Activated CD4-positive, alpha-beta memory T cell treated with anti-CD3 and anti-CD28 coated beads for 36 hours (primary cell): ENCODE measurements at regions of chr17 and their contacts with region 1.

Region 1: DNA sequence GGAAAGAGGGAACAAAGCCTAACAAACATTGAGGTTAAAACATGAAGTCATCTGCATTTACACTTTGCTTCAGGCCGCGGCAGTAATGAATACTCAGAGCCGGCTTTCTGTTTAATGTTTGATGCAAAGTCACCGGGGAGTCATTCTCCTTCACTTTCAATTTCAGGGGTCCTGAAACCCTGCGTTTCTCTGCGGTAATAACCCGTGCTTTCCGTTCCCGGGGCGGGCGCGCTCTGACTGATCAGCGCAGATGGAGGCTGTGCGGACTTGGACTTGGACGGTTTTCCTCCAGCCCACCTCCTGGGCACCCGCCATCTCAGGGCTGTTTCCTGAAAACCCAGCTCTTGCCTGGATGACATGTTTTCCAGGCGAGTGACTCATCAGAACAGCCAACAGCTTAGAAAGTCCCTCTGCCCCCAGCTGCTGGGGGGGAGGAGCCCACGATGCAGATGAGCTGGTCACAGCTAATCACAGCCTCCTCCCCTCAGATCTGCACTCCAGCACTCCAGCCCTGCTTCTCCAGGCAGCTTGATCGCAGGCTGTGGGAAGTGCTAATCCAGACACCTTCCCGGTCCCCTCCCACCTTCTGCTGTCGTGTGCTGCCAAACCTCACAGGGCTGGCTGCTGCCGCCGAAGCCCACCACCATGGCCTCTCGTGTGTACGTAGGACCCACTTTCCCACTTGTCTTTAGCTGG is 158.6 kb upstream of the CHMP6 start:
- DNase-seq: peak; percentile 92
- H3K4me3 Mint-ChIP-seq: peak overlapping the region; percentile 74
- H3K27ac Mint-ChIP-seq: peak overlapping the region; percentile 94
- H3K4me1 Mint-ChIP-seq: peaks cover 34% of the 10 kb centered on the region
- H3K27me3 Mint-ChIP-seq: no peaks in the 10 kb centered on the region

Region 2: DNA sequence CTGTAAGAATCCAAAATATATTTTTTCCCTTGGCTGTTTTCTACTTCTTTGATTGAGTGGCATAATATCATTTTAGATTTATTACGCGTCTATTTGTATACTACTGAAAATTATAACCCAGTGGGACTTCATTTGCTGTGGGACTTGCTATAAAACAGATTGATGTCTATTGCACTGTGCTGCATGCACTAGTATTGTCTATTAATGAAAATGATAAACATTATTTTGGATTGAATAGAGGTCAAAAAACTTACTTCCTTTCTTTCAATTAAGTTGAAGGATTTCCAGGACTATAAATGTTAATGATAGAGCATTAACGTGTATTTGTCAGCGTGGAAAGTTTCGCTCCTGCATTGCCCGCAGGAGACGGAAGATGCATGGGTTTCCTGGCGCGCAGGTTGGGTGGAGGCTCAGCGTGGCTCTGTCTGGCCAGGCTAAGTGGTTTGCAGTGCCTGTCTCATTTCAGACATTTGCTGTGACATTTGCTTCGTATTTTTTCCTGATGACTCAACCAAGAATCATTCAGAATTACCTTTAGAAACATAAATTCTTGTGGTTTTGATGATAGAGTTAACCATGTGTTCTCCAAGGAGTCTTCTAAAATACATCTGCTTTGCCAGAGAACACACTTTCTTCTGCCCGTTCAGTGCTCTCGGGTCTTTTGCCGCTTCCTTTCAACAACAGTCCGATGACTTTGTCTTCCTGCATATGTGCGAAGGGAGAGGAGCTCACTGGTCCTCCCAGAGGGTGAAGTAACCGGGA is 71.7 kb before region 1 on chr17:
- CTCF ChIA-PET with region 1: interaction called, 3 read pairs
- POLR2A ChIA-PET with region 1: no interaction called
- intact Hi-C with region 1: loop called (anchors 1 kb)
- DNase-seq: peak; percentile 86
- H3K4me3 Mint-ChIP-seq: peak overlapping the region; percentile 68
- H3K27ac Mint-ChIP-seq: peak overlapping the region; percentile 96
- H3K4me1 Mint-ChIP-seq: peaks cover 73% of the 10 kb centered on the region
- H3K27me3 Mint-ChIP-seq: no peaks in the 10 kb centered on the region

Region 3: DNA sequence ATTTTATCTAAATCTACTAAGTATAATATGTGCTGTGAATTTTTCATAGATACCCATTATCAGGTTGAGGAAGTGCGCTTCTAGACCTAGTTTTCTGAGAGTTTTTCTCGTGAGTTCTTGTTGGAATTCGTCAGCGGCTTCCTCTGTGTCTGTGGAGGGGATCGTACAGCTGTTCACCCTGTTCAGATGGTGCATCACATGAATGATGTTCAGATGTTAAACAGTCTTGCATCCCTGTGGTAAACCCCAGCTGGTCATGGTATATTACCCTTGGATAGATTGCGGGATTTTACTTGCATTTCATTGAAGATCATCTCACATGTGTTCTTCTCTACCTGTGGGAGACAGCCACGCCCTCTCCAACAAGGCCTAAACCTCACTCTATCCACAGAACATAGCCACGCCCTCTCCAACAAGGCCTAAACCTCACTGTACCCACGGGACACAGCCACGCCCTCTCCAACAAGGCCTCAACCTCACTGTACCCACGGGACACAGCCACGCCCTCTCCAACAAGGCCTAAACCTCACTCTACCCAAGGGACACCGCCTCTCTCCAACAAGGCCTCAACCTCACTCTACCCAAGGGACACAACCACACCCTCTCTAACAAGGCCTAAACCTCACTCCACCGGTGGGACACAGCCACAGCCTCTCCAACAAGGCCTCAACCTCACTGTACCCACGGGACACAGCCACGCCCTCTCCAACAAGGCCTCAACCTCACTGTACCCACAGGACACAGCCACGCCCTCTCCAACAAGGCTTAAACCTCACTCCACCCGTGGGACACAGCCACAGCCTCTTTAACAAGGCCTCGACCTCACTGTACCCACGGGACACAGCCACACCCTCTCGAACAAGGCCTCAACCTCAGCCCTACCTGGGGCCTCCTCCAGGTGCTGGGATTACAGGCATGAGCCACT is 21.6 kb before region 1 on chr17:
- CTCF ChIA-PET with region 1: interaction called, 4 read pairs
- POLR2A ChIA-PET with region 1: no interaction called
- intact Hi-C with region 1: loop called (anchors 2 kb)
- DNase-seq: peak; percentile 30
- H3K4me3 Mint-ChIP-seq: peak overlapping the region; percentile 45
- H3K27ac Mint-ChIP-seq: peak overlapping the region; percentile 97
- H3K4me1 Mint-ChIP-seq: peaks cover 36% of the 10 kb centered on the region
- H3K27me3 Mint-ChIP-seq: no peaks in the 10 kb centered on the region

Region 4: DNA sequence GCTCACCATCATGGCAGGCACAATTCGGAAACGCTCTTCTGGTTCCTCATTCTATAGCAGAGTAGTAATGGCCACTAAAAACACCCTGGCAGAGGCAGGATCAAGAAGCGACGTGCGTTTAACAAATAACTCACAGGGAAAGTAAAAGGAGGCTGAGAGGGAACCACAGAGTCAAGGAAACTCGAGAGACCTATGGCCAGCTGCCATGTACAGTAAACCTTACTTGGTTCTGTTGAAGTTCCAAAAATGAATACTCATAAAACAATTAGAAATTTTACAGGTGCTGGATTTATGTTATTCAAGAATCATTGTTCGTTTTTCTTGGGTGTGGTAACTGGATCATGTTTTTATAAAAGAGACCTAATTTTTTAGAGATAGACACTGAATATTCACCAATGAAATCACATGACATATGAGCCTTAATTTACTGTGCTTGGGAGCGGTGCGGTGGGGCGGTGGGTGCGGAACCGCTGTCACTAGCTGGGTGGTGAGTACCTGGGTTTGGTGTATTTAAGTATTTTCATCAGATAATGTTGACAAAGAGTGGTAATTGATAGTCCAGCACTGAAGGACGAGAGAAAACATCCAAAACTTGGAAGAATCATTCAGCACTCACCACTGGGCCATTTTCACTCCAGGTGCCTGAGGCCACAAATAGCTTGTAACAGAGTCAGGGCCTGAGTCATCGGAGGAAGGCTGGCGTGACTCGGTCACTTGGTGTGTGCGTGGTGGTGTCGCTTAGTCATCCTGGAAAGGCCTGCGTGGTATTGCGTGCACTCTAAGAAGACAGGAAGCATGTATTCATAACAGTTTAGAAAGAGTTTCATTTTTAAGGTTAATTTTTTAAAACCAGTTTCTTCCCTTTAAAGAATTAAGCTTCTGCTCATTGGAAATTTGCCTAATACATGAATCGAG is 23.2 kb after region 1 on chr17:
- CTCF ChIA-PET with region 1: interaction called, 9 read pairs
- POLR2A ChIA-PET with region 1: interaction called, 25 read pairs
- intact Hi-C with region 1: loop called (anchors 1 kb)
- DNase-seq: peak; percentile 96
- H3K4me3 Mint-ChIP-seq: peak overlapping the region; percentile 24
- H3K27ac Mint-ChIP-seq: peak overlapping the region; percentile 94
- H3K4me1 Mint-ChIP-seq: peaks cover 59% of the 10 kb centered on the region
- H3K27me3 Mint-ChIP-seq: no peaks in the 10 kb centered on the region

Region 5: DNA sequence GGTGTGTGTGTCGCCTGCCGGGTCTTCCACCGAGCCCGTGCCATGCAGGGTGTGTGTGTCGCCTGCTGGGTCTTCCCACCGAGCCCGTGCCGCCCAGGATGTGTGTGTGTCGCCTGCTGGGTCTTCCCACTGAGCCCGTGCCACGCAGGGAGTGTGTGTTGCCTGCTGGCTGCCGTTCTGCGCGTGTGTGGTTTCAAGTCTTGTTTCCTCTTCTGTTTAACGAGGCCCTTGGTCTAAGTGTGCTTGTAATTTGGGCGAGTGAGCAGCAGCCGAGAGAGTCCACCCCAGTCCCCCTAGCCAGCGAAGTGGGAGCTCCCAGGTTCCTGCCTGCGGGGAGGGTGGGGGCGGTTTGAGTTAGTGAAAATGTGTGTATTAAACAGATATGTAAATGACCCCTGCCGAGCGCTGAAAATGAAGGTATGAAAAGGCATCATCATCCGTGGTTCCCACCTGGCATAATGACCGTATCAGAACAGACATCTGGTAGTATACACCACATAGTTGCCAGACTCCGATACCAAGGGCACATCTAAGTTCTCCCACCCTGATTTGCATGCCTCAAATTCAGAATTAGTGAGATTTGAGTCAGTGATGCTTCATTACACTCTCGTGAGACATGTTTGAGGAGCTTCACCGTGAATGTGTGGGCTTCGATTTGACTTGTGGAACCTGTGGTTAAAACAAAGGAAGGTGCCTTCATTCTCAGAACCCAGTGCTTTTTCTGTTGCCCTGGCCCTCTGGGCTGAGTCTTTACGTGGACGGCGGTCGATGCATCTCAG is 44.1 kb after region 1 on chr17:
- CTCF ChIA-PET with region 1: interaction called, 6 read pairs
- POLR2A ChIA-PET with region 1: interaction called, 14 read pairs
- intact Hi-C with region 1: no loop called
- DNase-seq: peak; percentile 89
- H3K4me3 Mint-ChIP-seq: peak overlapping the region; percentile 70
- H3K27ac Mint-ChIP-seq: peak overlapping the region; percentile 98
- H3K4me1 Mint-ChIP-seq: peaks cover 49% of the 10 kb centered on the region
- H3K27me3 Mint-ChIP-seq: no peaks in the 10 kb centered on the region